Endothelial cell of umbilical vein (primary cell): ENCODE measurements at regions of chr5 and their contacts with region 1.

Region 1: GRCh38 chr5:36414869-36415282 is 113.2 kb upstream of the RANBP3L start:
- DNase-seq: peak; percentile 42
- H3K4me3 ChIP-seq: no peak overlapping the region
- H3K27ac ChIP-seq: no peak overlapping the region
- H3K4me1 ChIP-seq: no peaks in the 10 kb centered on the region
- H3K27me3 ChIP-seq: no peaks in the 10 kb centered on the region
- CTCF ChIP-seq: peak; percentile 9 to 21
- POLR2A ChIP-seq: no peak

Region 2: GRCh38 chr5:36701085-36701698 is 286.3 kb after region 1 on chr5:
- CTCF ChIA-PET with region 1: interaction called, 277 read pairs
- POLR2A ChIA-PET with region 1: no interaction called
- dilution Hi-C with region 1: no loop called
- intact Hi-C with region 1: no loop called
- DNase-seq: no peak
- H3K4me3 ChIP-seq: no peak overlapping the region
- H3K27ac ChIP-seq: no peak overlapping the region
- H3K4me1 ChIP-seq: no peaks in the 10 kb centered on the region
- H3K27me3 ChIP-seq: peaks cover 20 to 21% of the 10 kb centered on the region in 2 experiments
- CTCF ChIP-seq: no peak
- POLR2A ChIP-seq: no peak

Region 3: GRCh38 chr5:36801521-36801920 is 386.6 kb after region 1 on chr5:
- CTCF ChIA-PET with region 1: no interaction called
- POLR2A ChIA-PET with region 1: no interaction called
- dilution Hi-C with region 1: no loop called
- intact Hi-C with region 1: no loop called
- DNase-seq: no peak
- H3K4me3 ChIP-seq: no peak overlapping the region
- H3K27ac ChIP-seq: no peak overlapping the region
- H3K4me1 ChIP-seq: no peaks in the 10 kb centered on the region
- H3K27me3 ChIP-seq: peaks cover 0 to 3% of the 10 kb centered on the region in 2 experiments
- CTCF ChIP-seq: no peak
- POLR2A ChIP-seq: no peak